ENCODE measurements at regions of chr15 and their contacts with region 1.

Region 1: GRCh38 chr15:99755692-99756409 is 22.6 kb upstream of the LYSMD4 start:
- DNase-seq: peak in 8 of 9 donors; percentile 29 to 72 (median 62)
- ATAC-seq: peak; percentile 86
- H3K4me3 ChIP-seq: no peak overlapping the region
- H3K4me3 Mint-ChIP-seq: no peak overlapping the region
- H3K27ac ChIP-seq: no peak overlapping the region
- H3K27ac Mint-ChIP-seq: peak overlapping the region in 1 of 9 donors; percentile 10
- H3K4me1 ChIP-seq: no peaks in the 10 kb centered on the region
- H3K4me1 Mint-ChIP-seq: peaks cover 0 to 4% (median 0%) of the 10 kb centered on the region in 7 donors
- H3K27me3 ChIP-seq: no peaks in the 10 kb centered on the region
- H3K27me3 Mint-ChIP-seq: peaks cover 0 to 5% (median 0%) of the 10 kb centered on the region in 5 donors

Region 2: DNA sequence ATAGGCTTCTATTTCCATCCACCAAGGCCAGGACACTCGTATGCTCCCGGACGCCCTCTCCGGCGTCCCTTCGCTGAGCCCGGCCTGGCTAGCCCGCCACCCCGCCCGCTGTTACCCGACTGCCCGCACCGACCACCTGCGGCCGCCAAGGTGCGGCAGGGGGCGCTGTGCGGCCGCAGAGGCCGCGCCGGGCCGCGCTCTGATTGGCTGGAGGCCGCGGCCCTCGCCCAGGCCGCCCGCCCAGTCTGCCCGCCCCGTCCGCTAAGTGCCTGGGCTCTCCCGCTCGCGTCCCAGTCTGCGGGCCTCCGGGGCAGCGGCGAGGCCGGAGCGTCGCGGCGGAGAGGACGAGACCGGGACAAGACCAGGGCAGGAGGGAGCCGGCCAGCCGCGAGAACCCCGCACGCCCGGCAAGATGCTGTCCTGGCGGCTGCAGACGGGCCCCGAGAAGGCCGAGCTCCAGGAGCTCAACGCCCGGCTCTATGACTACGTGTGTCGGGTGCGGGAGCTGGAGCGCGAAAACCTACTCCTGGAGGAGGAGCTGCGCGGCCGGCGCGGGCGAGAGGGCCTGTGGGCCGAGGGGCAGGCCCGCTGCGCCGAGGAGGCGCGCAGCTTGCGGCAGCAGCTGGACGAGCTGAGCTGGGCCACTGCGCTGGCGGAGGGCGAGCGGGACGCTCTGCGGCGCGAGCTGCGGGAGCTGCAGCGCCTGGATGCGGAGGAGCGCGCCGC is 650.9 kb before region 1 on chr15 and contains the start of gene SYNM:
- CTCF ChIA-PET with region 1: no interaction called
- POLR2A ChIA-PET with region 1: no interaction called
- intact Hi-C with region 1: loop called in 1 of 2 experiments (anchors 2 kb)
- DNase-seq: peak in 5 of 9 donors; percentile 7 to 72 (median 19)
- ATAC-seq: peak; percentile 60
- H3K4me3 ChIP-seq: peak within 1 kb of the TSS; percentile 27
- H3K4me3 Mint-ChIP-seq: peak within 1 kb of the TSS in 9 of 10 donors; percentile 23 to 79 (median 59)
- H3K27ac ChIP-seq: no peak within 1 kb of the TSS
- H3K27ac Mint-ChIP-seq: peak within 1 kb of the TSS in 2 of 9 donors; percentile 29 to 82
- H3K4me1 ChIP-seq: peaks cover 0 to 12% of the 10 kb centered on the region in 2 donors
- H3K4me1 Mint-ChIP-seq: peaks cover 0 to 26% (median 9%) of the 10 kb centered on the region in 7 donors
- H3K27me3 ChIP-seq: peaks cover 0 to 5% of the 10 kb centered on the region in 2 donors
- H3K27me3 Mint-ChIP-seq: peaks cover 36 to 59% (median 39%) of the 10 kb centered on the region in 5 donors
- total RNA-seq, gene SYNM: 0.53 to 6.0 (median 2.2) TPM

Region 3: DNA sequence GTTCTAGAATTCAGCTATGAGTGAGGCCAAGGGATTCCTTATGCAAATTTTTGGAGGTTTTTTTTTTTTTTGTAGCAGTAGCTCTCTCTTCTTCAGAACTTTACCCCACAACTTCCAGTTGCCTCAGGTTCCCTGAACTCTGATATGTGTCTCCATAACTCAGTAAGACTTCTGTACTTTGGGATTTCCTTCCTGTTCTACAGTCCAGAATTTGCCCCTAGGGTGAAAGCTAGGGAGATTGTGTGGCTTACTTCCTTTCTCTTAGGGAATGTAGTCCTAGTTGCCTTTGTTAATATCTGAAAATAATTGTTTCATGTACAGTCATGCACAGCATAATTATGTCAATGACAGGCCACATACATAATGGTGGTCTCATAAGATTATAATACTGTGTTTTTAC is 473.7 kb before region 1 on chr15:
- CTCF ChIA-PET with region 1: interaction called, 13 read pairs
- POLR2A ChIA-PET with region 1: no interaction called
- intact Hi-C with region 1: loop called (anchors 1 kb)
- DNase-seq: no peak
- ATAC-seq: no peak
- H3K4me3 ChIP-seq: no peak overlapping the region
- H3K4me3 Mint-ChIP-seq: no peak overlapping the region
- H3K27ac ChIP-seq: no peak overlapping the region
- H3K27ac Mint-ChIP-seq: no peak overlapping the region
- H3K4me1 ChIP-seq: no peaks in the 10 kb centered on the region
- H3K4me1 Mint-ChIP-seq: peaks cover 9 to 47% (median 19%) of the 10 kb centered on the region in 7 donors
- H3K27me3 ChIP-seq: no peaks in the 10 kb centered on the region
- H3K27me3 Mint-ChIP-seq: no peaks in the 10 kb centered on the region

Region 4: GRCh38 chr15:99343881-99344551 is 411.8 kb before region 1 on chr15:
- CTCF ChIA-PET with region 1: interaction called, 4 read pairs
- POLR2A ChIA-PET with region 1: no interaction called
- intact Hi-C with region 1: loop called (anchors 1 to 10 kb)
- DNase-seq: peak; percentile 9 to 68 (median 57)
- ATAC-seq: peak; percentile 73
- H3K4me3 ChIP-seq: no peak overlapping the region
- H3K4me3 Mint-ChIP-seq: no peak overlapping the region
- H3K27ac ChIP-seq: no peak overlapping the region
- H3K27ac Mint-ChIP-seq: peak overlapping the region in 2 of 9 donors; percentile 8 to 61
- H3K4me1 ChIP-seq: no peaks in the 10 kb centered on the region
- H3K4me1 Mint-ChIP-seq: peaks cover 0 to 8% (median 6%) of the 10 kb centered on the region in 7 donors
- H3K27me3 ChIP-seq: no peaks in the 10 kb centered on the region
- H3K27me3 Mint-ChIP-seq: no peaks in the 10 kb centered on the region

Region 5: DNA sequence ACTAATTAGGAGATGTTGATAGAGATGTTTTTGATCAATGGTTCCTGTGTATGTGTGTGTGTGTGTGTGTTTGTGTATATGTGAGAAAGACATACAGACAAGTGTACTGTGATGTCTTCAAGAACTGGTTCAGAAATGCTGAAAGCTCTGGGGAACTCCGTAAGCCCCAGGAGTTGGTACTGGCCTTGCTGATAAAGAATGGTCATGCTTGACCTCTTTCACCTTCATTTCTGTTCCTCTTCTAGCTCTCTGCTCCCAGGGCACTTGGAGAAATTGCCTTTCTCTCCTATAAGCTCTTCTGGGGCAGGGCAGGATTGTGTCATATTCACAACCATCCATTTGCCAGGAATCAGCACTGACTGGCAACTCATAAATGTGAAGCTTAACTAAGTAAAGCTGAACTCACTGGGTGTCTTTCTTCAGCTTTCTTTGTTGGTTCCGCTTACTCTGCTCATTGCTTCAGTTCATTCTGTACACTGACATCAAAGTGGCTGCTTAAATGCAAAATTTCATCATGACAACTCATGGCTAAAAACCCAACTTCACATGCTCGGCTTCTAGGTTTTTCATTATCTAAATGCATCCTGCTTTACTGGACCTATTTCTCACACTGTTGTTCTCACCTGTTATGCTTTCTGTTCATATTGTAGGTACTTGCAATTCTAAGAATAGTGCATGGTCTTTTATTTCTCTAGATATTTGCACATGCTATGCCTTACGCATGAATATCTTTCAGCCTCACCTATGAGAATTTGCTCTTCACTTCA is 139.5 kb after region 1 on chr15:
- CTCF ChIA-PET with region 1: no interaction called
- POLR2A ChIA-PET with region 1: no interaction called
- intact Hi-C with region 1: no loop called
- DNase-seq: no peak
- ATAC-seq: no peak
- H3K4me3 ChIP-seq: no peak overlapping the region
- H3K4me3 Mint-ChIP-seq: no peak overlapping the region
- H3K27ac ChIP-seq: no peak overlapping the region
- H3K27ac Mint-ChIP-seq: no peak overlapping the region
- H3K4me1 ChIP-seq: no peaks in the 10 kb centered on the region
- H3K4me1 Mint-ChIP-seq: no peaks in the 10 kb centered on the region
- H3K27me3 ChIP-seq: no peaks in the 10 kb centered on the region
- H3K27me3 Mint-ChIP-seq: no peaks in the 10 kb centered on the region

Measured in naive thymus-derived CD4-positive, alpha-beta T cell (primary cell).